Activated B cell treated with CpG ODN at 0.5 μM for 24 hours (primary cell): ENCODE measurements at regions of chr7 and their contacts with region 1.

Region 1: GRCh38 chr7:44044315-44045225 is at the start of gene DBNL:
- DNase-seq: peak; percentile 92
- ATAC-seq: peak; percentile 50
- H3K4me3 Mint-ChIP-seq: peak within 1 kb of the TSS; percentile 93
- H3K27ac Mint-ChIP-seq: peak within 1 kb of the TSS; percentile 95
- H3K4me1 Mint-ChIP-seq: peaks cover 64% of the 10 kb centered on the region
- H3K27me3 Mint-ChIP-seq: no peaks in the 10 kb centered on the region
- CTCF ChIP-seq: no peak
- total RNA-seq, gene DBNL: 198 and 210 TPM in 2 replicates

Region 2: DNA sequence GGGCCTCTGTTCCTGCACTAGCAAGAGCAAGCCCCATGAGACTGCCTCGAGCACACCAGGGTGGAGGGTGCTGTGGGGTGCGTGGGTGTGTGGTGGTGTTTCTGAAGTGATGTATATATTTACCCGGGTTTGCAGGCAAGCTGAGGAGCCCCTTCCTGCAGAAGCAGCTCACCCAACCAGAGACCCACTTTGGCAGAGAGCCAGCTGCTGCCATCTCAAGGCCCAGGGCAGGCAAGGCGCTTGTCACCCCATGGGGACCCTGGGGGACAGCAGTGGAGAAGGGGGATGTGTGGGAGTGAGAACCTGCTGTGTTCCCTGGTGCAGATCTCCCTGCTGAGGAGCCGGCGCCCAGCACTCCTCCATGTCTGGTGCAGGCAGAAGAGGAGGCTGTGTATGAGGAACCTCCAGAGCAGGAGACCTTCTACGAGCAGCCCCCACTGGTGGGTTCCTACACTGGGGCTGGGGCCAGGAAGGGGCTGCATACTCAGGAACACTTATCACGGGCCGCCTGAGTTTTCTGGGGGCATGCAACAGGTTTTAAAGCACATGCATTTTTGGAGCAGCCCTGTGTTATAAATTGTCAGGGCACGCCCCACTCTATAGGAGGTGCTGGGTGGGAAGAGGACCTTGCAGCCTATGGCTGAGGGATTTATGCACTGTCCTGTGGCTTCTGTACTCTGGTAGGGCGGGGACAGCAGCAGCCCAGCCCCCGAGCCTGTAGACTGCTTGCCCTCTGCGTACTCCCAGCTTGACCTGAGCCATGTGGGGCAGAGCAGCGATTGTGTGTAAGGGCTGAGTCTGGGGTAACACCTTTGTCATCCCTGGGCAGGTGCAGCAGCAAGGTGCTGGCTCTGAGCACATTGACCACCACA is 14.9 kb after region 1 on chr7:
- CTCF ChIA-PET with region 1: no interaction called
- POLR2A ChIA-PET with region 1: interaction called, 55 read pairs
- intact Hi-C with region 1: loop called (anchors 1 kb)
- DNase-seq: peak; percentile 57
- ATAC-seq: peak; percentile 89
- H3K4me3 Mint-ChIP-seq: peak overlapping the region; percentile 82
- H3K27ac Mint-ChIP-seq: peak overlapping the region; percentile 98
- H3K4me1 Mint-ChIP-seq: peaks cover 74% of the 10 kb centered on the region
- H3K27me3 Mint-ChIP-seq: no peaks in the 10 kb centered on the region
- CTCF ChIP-seq: no peak

Region 3: DNA sequence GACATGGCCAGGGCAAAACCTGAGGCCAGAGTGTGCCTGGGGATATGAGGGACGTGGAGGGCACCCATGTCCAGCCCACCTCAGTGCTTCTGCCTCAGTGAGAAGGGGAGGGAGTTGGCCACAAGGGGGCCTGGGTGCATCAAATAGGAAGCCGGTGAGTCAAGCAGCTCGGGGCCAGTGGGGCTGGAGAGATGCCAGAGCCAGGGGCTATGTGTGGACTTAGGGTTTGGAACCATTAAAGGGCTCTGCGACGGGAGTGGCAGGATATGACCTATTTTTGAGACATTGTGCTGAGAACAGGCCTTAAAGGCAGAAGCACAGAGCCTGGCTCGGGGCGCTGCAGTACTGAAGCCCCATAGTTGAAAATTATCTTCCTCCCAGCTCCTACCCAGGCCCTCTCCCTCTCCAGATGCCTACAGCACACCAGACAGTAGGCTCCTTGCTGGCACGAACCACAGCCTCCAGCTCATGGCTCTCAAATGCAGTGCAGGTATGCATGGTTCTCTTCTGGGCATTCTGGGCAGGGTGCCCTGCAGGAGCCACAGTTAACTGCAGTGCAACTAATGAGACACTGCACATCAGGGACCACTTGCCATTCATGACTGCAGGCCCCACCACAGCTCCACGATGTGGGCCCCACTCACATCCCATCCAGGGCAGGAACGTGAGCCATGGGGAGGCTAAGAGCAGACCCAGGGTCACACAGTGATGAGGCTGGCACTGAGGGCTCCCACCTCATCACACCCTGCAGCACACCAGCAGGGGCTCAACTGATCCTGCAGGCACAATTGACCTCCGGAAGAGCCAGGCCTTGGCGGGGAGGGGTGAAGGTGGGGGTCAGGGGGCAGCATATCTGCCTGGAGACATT is 28.0 kb after region 1 on chr7:
- CTCF ChIA-PET with region 1: interaction called, 4 read pairs
- POLR2A ChIA-PET with region 1: interaction called, 55 read pairs
- intact Hi-C with region 1: loop called (anchors 1 kb)
- DNase-seq: no peak
- ATAC-seq: peak; percentile 22
- H3K4me3 Mint-ChIP-seq: no peak overlapping the region
- H3K27ac Mint-ChIP-seq: peak overlapping the region; percentile 90
- H3K4me1 Mint-ChIP-seq: peaks cover 84% of the 10 kb centered on the region
- H3K27me3 Mint-ChIP-seq: no peaks in the 10 kb centered on the region
- CTCF ChIP-seq: no peak

Region 4: GRCh38 chr7:44200647-44201461 is 156.3 kb after region 1 on chr7 and contains the start of gene YKT6:
- CTCF ChIA-PET with region 1: no interaction called
- POLR2A ChIA-PET with region 1: interaction called, 12 read pairs
- intact Hi-C with region 1: loop called (anchors 1 kb)
- DNase-seq: peak; percentile 87
- ATAC-seq: peak; percentile 97
- H3K4me3 Mint-ChIP-seq: peak within 1 kb of the TSS; percentile 87
- H3K27ac Mint-ChIP-seq: peak within 1 kb of the TSS; percentile 12
- H3K4me1 Mint-ChIP-seq: peaks cover 27% of the 10 kb centered on the region
- H3K27me3 Mint-ChIP-seq: peaks cover 6% of the 10 kb centered on the region
- CTCF ChIP-seq: no peak
- total RNA-seq, gene YKT6: 78.2 and 78.7 TPM in 2 replicates